AG04449 (cell line): ENCODE measurements at regions of chr17 and their contacts with region 1.

Region 1: GRCh38 chr17:47889734-47890529 is 6.1 kb upstream of the SP2 start:
- DNase-seq: no peak
- H3K4me3 ChIP-seq: no peak overlapping the region
- CTCF ChIP-seq: peak; percentile 89

Region 2: DNA sequence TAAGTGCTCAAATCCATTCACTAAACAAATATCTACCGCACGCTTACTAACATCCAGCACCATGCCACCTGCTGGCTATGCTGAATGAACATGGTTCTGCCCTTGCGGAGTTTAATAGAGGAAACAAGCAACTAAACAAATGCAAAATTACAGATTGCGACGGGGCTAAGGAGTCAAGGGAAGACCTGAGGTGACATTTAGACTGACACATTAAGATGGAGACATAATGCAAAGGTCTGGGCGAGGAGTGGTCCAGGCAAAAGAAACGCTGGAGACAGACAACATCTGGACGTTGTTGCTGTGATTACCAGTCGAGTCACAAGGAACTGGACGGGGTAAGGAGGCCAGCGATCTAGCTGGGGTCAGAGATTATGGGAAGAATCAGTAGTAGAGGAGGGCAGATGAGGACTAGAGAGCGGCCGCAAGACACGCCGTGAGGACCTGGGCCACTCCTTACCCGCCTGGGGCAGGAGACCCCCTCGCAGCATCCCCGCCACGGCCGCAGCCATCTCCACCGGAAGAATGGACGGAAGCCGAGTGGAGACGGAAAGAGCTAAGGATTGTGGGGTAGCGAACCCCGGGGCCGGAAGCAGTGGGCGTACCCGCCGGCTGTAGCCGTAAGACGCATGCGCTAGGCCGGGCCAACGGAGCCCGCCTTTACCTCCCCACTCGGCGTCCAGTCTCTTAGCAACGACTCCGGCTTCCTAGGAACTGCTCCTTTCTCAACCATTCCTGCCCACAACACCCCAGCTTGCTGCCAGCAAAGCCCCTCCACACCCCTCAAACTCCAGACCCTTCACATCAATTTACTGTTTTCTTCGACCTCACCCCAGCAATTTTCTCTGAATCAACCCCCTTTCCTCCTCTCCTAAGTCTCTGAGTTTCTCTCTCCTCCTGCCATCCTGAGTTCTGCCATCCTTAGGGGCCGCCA is 58.7 kb before region 1 on chr17 and contains the starts of genes LRRC46 and MRPL10:
- CTCF ChIA-PET with region 1: interaction called, 1,547 read pairs
- POLR2A ChIA-PET with region 1: no interaction called
- DNase-seq: peak; percentile 45
- H3K4me3 ChIP-seq: peak within 1 kb of the TSS; percentile 64
- CTCF ChIP-seq: peak; percentile 43

Region 3: DNA sequence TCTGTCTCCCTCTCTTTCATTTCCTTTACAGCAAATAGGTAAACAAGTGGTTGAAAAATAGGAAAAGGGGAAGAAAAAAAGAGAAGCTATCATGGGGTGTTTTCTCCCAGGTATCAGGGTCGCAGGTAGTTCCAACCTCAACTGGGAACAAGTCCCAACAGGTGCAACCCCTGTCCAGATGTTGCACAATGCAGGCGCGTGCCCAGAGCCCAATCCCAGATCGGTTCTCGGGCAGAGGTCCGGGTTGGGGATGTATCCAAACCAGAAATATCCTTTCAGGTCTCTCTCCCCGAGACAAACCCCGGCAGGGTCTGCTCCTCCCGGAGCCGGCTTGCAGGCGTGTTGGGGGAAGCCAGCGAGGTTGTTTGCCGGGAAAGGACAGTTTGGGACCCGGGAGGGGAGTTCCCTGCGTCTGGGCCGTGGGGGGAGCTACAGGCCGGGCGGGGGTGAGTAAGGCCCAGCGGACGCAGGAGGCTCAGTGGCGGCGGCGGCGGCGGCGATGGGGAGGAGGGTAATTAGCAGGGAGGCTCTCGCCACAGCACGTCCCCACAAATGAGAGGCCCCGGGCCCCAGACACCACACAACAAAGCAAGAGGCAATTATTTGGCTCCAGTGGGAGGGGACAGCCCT is 17.8 kb before region 1 on chr17:
- CTCF ChIA-PET with region 1: interaction called, 82 read pairs
- POLR2A ChIA-PET with region 1: interaction called, 3 read pairs
- DNase-seq: no peak
- H3K4me3 ChIP-seq: no peak overlapping the region
- CTCF ChIP-seq: no peak

Region 4: GRCh38 chr17:47905221-47905781 is 15.4 kb after region 1 on chr17:
- CTCF ChIA-PET with region 1: interaction called, 10 read pairs
- POLR2A ChIA-PET with region 1: no interaction called
- DNase-seq: peak; percentile 54
- H3K4me3 ChIP-seq: no peak overlapping the region
- CTCF ChIP-seq: no peak

Region 5: GRCh38 chr17:48236681-48237134 is 346.8 kb after region 1 on chr17:
- CTCF ChIA-PET with region 1: no interaction called
- POLR2A ChIA-PET with region 1: no interaction called
- DNase-seq: no peak
- H3K4me3 ChIP-seq: no peak overlapping the region
- CTCF ChIP-seq: no peak